GM10248 (cell line): ENCODE measurements at regions of chr18 and their contacts with region 1.

Region 1: DNA sequence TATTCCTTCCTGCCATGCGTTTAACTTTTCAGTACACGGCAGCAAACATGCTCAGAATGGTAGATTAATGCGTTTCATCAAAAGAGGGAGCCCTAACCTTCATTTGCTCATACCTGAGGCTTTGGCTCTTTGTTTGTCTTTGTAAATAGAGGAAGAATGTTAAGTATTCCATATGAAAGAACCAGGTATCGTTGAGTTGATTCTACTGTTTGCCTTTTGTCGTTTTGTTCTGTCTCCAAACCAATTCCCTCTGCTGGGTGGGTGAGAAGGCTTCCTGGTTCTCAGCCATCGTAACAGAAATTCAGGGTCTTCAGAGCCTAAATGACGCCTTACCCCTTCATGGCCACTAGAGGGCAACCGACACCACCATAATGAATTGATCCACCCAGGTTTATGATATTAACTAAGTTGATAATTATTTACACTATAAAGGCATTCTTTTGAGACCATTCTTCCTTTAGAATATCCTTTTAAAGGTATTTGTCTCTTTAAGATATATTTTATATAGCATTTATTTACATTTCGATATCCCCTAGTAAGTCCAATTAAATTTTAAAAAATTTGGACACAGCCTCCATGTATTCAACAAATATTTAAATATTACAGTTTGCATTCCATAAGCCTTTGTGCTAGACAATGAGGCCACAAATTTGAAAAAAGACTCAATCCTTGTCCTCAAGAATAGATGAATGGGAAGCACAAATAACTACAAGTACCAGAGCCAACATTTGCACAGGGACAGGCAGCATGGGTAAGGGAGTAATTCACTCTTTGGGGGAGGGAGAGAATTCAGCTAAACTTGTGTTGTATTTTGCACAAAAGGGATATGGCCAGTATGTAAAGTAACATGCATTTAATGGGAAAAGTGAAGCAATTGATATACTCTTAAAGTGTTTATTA is 48.1 kb downstream of the TIMM21 start:
- DNase-seq: peak; percentile 80
- CTCF ChIP-seq: peak; percentile 88

Region 2: DNA sequence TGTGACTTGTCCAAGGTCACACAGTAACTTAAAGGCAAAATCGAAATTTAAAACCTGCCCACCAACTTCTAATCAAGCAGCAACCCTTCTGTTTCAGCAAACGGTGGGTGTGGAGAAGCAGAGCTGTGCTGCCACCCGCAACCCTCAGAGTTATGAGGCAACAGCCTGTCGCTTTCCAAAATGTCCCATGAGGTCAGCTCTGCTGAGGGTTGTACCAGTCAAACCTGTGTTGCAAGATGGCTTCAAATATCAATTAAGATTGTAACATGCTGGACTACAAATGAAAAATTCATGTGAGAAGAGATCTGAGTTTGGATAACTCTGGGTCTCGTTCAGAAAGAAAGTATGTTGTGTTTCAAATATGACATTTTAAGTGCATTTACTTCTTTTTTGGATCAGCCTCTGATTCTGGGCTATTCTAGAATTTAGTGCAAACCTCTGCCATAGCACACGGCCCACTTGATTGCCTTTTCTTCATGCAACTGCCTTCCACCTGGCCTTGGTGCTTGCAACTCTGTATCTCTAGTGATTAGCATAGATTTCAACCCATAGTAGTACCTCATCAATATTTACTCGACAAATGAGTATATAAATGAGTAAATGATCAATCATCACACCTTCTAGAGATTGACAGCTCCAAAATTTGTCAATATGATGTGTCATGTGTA is 21.1 kb after region 1 on chr18:
- CTCF ChIA-PET with region 1: no interaction called
- POLR2A ChIA-PET with region 1: no interaction called
- DNase-seq: no peak
- CTCF ChIP-seq: no peak

Region 3: DNA sequence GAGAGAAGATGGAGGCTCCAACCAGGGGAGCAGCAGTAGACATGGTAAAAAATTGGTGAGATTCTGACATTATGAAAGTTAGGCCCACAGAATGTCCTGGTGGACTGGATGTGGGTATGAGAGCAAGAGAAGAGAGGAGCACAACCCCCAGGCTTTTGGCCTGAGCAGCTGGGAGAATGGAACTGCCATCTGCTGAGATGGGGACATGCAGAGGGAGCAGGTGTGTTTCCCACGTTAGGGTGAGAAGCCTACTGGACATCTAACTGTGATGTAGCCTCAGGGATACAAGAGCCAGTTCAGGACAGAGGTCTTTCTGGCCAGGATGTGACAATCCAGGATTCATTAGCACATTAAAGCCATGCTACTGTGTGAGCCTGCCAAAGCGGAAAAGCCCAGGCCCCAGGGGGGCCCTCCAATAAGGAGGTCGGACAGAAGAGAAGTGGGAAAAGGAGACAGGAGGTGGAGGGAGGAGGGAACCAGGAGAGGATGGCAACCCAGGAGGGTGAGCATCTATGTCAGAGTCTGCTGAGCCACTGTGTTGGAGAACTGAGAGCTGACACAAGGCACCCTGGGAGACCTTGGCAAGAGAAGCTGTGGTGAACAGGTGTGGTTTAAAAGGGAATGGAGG is 84.7 kb after region 1 on chr18:
- CTCF ChIA-PET with region 1: no interaction called
- POLR2A ChIA-PET with region 1: no interaction called
- DNase-seq: peak; percentile 9
- CTCF ChIP-seq: no peak

Region 4: DNA sequence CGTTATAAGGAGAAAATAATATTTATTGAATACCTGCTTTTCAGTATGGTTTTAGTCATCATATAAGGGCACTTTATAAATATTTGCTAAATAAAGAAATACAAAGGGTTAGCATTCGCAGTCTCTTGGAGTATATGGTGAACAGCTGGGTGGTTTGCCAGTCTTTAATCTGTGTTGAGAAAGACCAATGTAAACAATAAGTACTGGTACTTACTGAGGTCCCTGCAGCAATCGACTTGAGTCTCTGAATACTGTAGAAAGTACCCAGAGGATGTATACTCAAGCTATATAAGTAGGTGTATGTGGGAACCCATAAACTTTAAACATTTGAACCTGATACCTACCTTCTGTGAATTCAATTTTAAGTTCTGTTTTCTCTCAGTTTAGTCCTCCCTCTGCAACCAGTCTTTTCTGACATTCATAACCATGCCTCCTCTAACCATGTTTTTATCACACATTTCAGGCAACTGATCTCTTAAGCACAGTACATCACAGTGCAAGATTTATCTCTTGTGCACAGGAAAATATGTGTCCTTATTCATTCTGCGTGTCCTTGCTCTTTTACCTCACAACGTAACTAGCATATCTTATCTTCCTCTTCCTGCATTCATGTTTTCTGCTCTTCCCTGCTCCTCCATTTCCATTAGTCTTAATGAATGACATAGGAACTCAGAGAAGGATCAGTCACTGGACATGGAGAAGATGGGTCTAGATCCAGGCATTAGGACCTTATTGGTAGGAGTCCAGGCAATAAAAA is 140.9 kb after region 1 on chr18:
- CTCF ChIA-PET with region 1: interaction called, 51 read pairs
- POLR2A ChIA-PET with region 1: no interaction called
- DNase-seq: no peak
- CTCF ChIP-seq: no peak